ENCODE measurements at regions of chr11 and their contacts with region 1.

Region 1: DNA sequence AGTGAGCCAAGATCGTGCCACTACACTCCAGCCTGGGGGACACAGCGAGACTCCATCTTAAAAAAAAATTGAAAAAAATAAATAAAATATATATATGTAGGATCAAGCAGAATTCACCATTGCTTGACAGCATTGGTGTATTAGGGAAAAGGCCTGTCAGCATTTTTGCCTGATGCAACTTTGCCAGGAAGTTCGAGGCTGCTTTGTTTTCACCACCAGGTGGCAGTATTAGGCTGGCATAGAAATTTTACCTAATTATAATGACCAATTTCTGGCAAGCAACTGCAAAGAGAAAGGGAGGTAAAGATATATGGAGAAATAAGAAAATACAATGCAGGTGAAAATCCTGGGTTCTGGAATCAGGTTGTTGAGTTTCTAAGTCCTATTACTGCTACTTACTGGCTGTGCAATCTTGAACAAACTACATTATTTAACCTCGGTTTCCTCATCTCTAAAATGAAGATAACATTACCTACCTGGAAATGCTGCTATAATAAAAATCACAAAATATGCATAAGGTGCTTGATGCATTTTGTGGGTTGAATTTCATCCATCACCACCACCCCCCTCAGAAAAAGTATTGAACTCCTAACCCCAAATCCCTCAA is 24.7 kb downstream of the LAYN start:
- DNase-seq: peak; percentile 78
- ATAC-seq: peak; percentile 44
- H3K4me3 Mint-ChIP-seq: no peak overlapping the region
- H3K27ac Mint-ChIP-seq: no peak overlapping the region
- H3K4me1 Mint-ChIP-seq: no peaks in the 10 kb centered on the region
- H3K27me3 Mint-ChIP-seq: peaks cover 4% of the 10 kb centered on the region

Region 2: DNA sequence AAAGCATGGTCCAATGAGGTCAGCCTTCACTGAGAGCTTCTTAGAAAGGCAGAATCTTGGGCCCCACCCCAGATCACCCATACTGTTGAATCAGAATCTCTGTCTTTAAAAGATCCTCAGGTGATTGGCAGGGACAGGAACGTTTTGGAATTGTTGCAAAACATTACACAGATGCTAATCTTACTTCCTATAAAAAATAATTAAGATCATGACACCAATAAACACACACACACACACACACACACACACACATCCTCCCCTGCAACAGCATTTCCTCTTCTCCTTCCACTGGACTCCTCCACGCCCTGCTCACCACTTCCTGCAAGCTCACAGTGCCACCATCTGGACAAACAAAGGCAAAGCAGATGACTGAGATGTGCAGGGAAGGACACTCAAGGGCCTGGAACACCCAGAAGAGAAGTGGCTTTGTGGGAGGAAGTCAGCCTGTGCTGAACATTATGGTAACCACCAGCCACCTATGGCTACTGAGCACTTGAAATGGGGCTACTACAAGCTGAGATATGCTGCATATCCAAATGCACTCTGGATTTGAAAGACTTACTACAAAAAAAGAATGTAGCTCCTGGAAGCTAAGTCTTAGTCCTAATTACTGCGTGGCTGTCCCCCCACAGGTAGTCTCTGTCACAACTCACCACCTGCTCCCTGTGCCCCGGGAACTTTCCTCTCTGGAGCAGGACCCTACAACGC is 118.7 kb before region 1 on chr11:
- CTCF ChIA-PET with region 1: interaction called, 10 read pairs
- POLR2A ChIA-PET with region 1: no interaction called
- DNase-seq: peak; percentile 89
- ATAC-seq: peak; percentile 99
- H3K4me3 Mint-ChIP-seq: no peak overlapping the region
- H3K27ac Mint-ChIP-seq: peak overlapping the region; percentile 48
- H3K4me1 Mint-ChIP-seq: peaks cover 17% of the 10 kb centered on the region
- H3K27me3 Mint-ChIP-seq: peaks cover 4% of the 10 kb centered on the region

Region 3: GRCh38 chr11:111735262-111736116 is 170.3 kb after region 1 on chr11:
- CTCF ChIA-PET with region 1: no interaction called
- POLR2A ChIA-PET with region 1: no interaction called
- DNase-seq: no peak
- ATAC-seq: no peak
- H3K4me3 Mint-ChIP-seq: no peak overlapping the region
- H3K27ac Mint-ChIP-seq: peak overlapping the region; percentile 60
- H3K4me1 Mint-ChIP-seq: no peaks in the 10 kb centered on the region
- H3K27me3 Mint-ChIP-seq: no peaks in the 10 kb centered on the region